CD14-positive monocyte (primary cell): ENCODE measurements at regions of chr1 and their contacts with region 1.

Region 1: GRCh38 chr1:89942825-89943688 is 51.9 kb upstream of the ZNF326 start:
- DNase-seq: peak; percentile 74 to 85 (median 84)
- H3K4me3 ChIP-seq: peak overlapping the region in 1 of 3 experiments; percentile 16
- H3K4me3 Mint-ChIP-seq: peak overlapping the region; percentile 1 to 26
- H3K27ac ChIP-seq: peak overlapping the region; percentile 81 to 89
- H3K27ac Mint-ChIP-seq: peak overlapping the region; percentile 90 to 98 (median 94)
- H3K4me1 ChIP-seq: peaks cover 51 to 63% of the 10 kb centered on the region in 2 donors
- H3K4me1 Mint-ChIP-seq: peaks cover 50% of the 10 kb centered on the region
- H3K27me3 ChIP-seq: no peaks in the 10 kb centered on the region
- H3K27me3 Mint-ChIP-seq: peaks cover 0 to 4% (median 3%) of the 10 kb centered on the region in 3 donors
- CTCF ChIP-seq: no peak

Region 2: DNA sequence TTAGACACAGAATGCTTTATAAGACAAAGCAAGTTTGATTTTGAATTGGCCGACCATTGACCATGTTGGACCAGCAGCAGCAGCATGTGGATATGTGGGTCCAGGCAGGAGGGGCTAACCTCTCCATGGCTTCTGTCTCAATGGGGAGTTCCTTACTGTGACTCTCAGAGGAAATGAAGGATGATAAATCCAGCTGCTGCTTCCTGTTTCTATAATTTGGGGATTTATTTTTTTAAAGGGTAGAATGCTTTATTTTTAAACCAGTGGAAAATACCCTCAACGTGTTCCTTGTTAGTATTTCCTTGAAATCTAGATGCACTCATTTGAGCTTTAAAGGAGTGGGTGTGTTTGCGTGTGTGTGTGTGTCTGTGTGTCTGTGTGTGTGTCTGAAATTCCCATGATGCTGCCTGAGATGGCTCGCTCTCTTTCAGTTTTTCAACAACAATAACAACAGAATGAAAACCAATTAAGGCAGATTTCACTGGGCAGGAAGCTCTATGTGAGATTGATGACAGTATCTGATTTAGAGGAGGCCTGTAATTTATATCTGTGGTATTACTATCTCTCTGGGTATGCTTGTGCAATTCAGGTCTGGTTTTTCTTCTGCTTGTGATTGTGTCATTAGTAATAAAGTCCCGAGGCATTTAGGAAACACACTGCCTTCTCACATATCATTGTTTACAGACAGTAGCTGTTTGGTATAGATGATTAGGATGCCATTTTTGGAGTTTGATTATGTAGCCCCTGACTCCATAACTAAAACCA is 34.2 kb before region 1 on chr1:
- intact Hi-C with region 1: loop called in 1 of 2 experiments (anchors 5 kb)
- DNase-seq: peak; percentile 70 to 93 (median 76)
- H3K4me3 ChIP-seq: peak overlapping the region in 1 of 3 experiments; percentile 1
- H3K4me3 Mint-ChIP-seq: peak overlapping the region in 1 of 2 donors; percentile 71
- H3K27ac ChIP-seq: peak overlapping the region; percentile 67 to 91
- H3K27ac Mint-ChIP-seq: peak overlapping the region; percentile 94 to 98 (median 96)
- H3K4me1 ChIP-seq: peaks cover 43 to 50% of the 10 kb centered on the region in 2 donors
- H3K4me1 Mint-ChIP-seq: peaks cover 68% of the 10 kb centered on the region
- H3K27me3 ChIP-seq: no peaks in the 10 kb centered on the region
- H3K27me3 Mint-ChIP-seq: no peaks in the 10 kb centered on the region
- CTCF ChIP-seq: no peak

Region 3: DNA sequence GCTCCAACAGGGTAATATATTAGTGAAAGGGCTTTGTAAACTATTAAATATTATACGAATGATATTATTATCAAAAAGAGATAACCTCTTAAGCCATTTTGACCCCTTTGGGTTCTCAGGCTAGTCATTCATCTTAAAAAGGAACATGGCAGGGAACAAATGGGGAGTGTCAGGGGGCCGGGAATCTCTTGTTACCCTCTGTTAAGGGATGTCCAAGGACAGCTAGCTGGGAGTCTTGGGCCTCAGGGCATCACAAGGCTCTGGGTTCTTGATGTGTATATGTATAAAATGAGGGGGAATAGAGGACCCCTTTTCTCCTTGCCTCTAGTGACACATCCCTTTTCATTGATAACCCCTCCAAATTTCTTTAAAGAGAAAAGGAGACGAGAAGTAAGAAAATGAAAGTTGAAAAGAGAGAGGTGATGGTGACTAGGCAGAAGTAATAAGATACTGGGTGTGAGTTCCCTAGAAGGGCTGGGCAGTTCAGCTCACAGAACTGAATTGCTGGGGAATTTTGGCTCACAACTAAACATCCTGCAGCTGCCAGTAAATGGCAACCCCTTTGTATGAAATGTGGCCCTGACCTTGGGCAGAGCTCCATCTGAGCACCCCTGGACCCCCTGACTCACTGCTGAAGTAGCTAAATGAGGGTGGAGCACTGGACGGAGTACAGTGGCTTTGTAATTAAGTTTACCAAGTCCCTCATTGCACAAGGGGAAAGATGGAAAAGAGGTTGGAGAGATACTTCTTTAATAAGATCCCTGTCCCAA is 31.8 kb after region 1 on chr1:
- intact Hi-C with region 1: loop called in 1 of 2 experiments (anchors 5 kb)
- DNase-seq: peak in 2 of 3 donors; percentile 7 to 29
- H3K4me3 ChIP-seq: peak overlapping the region in 1 of 3 experiments; percentile 63
- H3K4me3 Mint-ChIP-seq: peak overlapping the region in 1 of 2 donors; percentile 88
- H3K27ac ChIP-seq: peak overlapping the region; percentile 32 to 63
- H3K27ac Mint-ChIP-seq: peak overlapping the region; percentile 64 to 88 (median 78)
- H3K4me1 ChIP-seq: peaks cover 25 to 26% of the 10 kb centered on the region in 2 donors
- H3K4me1 Mint-ChIP-seq: peaks cover 29% of the 10 kb centered on the region
- H3K27me3 ChIP-seq: no peaks in the 10 kb centered on the region
- H3K27me3 Mint-ChIP-seq: peaks cover 0 to 4% (median 2%) of the 10 kb centered on the region in 3 donors
- CTCF ChIP-seq: no peak